ENCODE measurements at regions of chr10 and their contacts with region 1.

Region 1: DNA sequence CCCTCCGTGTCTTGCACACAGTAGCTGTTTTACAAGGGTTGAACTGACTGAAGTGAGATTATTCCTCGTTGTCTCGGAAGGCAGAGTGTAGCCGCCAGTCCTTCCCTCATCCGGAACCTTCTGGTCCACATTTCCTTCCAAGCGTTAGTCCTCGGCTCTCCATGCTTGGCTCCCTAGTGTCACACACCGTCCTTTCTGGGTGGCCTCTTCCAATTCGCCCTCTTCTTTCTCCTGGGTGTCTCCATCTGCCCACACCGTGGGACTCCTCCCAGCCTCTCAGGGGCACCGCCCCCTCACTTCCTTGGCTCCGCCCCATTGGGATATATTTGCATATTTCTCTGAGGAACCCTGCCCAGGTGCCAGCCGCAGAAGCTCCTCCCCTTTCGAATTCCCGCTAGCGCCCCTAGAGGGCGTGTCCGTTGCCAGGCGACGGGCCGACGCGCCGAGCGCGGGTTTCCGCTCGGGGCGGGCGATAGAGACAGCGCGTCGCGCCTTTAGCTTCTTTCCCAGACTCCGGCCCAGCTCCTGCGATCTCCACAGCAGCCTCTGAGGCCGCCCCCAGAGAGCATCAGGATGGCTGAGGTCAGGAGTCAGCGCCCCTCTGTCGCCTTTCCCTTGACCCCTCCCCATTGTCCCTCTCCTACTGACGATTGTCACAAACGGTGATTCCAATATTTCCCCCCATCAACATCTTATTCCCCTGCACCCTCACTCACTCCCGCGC is at the start of gene CFAP58:
- DNase-seq: peak; percentile 88
- H3K4me3 ChIP-seq: peak within 1 kb of the TSS; percentile 19 to 50 (median 45)
- H3K27ac ChIP-seq: no peak within 1 kb of the TSS
- H3K4me1 ChIP-seq: peaks cover 36% of the 10 kb centered on the region
- H3K27me3 ChIP-seq: no peaks in the 10 kb centered on the region
- CTCF ChIP-seq: peak; percentile 35 to 70
- total RNA-seq, gene CFAP58: 0.17 to 1.0 TPM

Region 2: DNA sequence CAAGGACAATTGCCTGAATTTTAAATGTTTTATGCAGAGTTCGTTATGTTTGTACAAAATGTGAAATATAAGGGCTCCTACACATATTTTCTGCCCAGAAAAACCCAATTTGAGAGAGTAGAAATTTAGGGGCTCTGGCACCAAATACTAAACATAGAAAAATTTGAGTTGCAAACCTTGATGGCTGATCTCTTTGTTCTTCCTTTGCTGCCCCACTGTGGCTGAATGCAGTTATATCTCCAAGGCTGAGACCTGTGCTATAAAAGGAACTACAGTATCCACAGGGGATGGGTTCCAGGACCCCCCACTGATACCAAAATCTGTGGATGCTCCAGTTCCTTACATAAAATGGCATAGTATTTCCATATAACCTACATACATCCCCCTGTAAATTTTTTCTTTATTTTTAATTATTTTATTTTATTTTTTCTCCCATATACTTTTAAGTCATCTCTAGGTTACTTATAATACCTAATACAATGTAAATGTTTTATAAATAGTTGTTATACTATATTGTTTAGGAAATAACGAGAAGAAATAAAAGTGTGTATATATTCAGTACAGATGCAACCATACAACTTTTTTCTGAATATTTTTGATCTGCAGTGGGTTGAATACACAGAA is 143.8 kb before region 1 on chr10:
- CTCF ChIA-PET with region 1: no interaction called
- dilution Hi-C with region 1: no loop called
- in situ Hi-C with region 1: no loop called
- intact Hi-C with region 1: loop called (anchors 2 kb)
- DNase-seq: peak; percentile 21
- H3K4me3 ChIP-seq: no peak overlapping the region
- H3K27ac ChIP-seq: no peak overlapping the region
- H3K4me1 ChIP-seq: no peaks in the 10 kb centered on the region
- H3K27me3 ChIP-seq: no peaks in the 10 kb centered on the region
- CTCF ChIP-seq: peak; percentile 54 to 75

Region 3: DNA sequence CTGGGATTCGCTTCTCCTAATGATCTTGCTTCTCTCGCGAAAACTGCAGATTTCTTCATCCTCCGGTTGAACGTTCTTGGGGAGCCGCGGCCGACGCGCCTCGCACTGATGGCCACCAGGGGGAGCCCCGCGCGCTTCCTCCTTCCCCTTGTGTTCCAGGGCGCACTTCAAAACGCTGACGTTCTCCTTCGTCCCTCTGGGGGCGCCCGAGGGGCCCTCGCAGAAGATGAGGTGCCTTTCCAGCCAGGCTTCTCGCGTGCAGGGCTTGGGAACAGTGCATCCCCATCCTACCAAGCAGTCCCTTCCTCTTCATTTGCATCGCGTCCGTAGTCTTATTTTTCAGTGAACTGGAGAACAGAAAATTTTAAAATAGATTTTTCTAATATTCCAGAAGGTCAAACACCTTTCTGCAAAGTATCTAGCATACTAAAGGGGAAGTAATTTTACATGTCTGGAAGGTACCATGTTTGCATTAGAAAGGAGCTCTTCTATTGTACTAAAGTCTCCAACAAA is 62.0 kb before region 1 on chr10:
- CTCF ChIA-PET with region 1: interaction called, 8 read pairs
- dilution Hi-C with region 1: no loop called
- in situ Hi-C with region 1: loop called in 1 of 2 experiments (anchors 5 kb)
- intact Hi-C with region 1: loop called (anchors 1 kb)
- DNase-seq: peak; percentile 76
- H3K4me3 ChIP-seq: no peak overlapping the region
- H3K27ac ChIP-seq: no peak overlapping the region
- H3K4me1 ChIP-seq: no peaks in the 10 kb centered on the region
- H3K27me3 ChIP-seq: no peaks in the 10 kb centered on the region
- CTCF ChIP-seq: peak; percentile 99 to 100

Region 4: GRCh38 chr10:104328896-104329710 is 24.4 kb before region 1 on chr10:
- CTCF ChIA-PET with region 1: interaction called, 3 read pairs
- dilution Hi-C with region 1: no loop called
- in situ Hi-C with region 1: no loop called
- intact Hi-C with region 1: loop called (anchors 1 kb)
- DNase-seq: peak; percentile 99
- H3K4me3 ChIP-seq: peak overlapping the region in 2 of 3 experiments; percentile 24 to 35
- H3K27ac ChIP-seq: peak overlapping the region; percentile 98
- H3K4me1 ChIP-seq: peaks cover 77% of the 10 kb centered on the region
- H3K27me3 ChIP-seq: no peaks in the 10 kb centered on the region
- CTCF ChIP-seq: no peak

Region 5: DNA sequence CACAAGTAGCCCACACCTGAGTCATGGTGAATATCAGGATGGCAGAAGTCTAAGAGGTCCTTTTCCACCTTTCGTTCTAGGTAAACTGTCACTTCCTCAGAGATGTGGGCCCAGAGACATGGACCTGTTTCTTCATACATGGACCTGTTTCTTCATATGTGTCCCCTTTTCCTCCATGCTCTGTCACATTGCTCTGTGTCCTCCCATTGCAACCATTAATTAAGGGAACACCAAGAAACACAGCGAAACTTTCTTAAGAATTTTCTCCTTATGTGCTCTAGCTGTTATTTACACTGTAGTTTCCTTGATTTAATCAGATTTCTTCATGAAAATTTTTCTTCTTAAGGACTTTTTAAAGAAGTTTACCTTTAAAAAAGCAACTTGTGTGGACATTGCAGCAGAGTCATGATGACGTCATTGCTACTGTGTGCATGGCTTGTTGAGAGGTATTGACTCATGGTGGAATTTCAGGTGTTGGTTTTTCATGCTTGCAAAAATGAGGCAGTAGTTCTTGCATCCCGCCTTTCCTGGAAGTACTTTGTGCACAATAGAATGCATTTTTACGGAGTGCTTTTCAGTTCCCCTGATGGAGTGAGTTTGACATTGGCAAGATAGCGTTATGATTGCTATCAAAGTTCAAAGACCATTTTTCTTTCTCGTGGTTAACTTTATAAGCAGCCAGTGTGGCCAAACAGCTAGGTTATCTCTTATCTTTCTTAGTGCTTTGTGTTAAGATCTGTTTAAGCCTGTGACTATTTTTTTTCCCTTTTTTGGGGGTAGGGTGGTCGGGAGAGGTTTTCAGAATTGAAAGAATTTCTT is 37.9 kb after region 1 on chr10:
- CTCF ChIA-PET with region 1: no interaction called
- dilution Hi-C with region 1: no loop called
- in situ Hi-C with region 1: no loop called
- intact Hi-C with region 1: loop called (anchors 2 kb)
- DNase-seq: peak; percentile 85
- H3K4me3 ChIP-seq: no peak overlapping the region
- H3K27ac ChIP-seq: no peak overlapping the region
- H3K4me1 ChIP-seq: peaks cover 10% of the 10 kb centered on the region
- H3K27me3 ChIP-seq: no peaks in the 10 kb centered on the region
- CTCF ChIP-seq: no peak